Activated CD4-positive, alpha-beta T cell treated with anti-CD3 and anti-CD28 coated beads for 36 hours (primary cell): ENCODE measurements at regions of chr7 and their contacts with region 1.

Region 1: DNA sequence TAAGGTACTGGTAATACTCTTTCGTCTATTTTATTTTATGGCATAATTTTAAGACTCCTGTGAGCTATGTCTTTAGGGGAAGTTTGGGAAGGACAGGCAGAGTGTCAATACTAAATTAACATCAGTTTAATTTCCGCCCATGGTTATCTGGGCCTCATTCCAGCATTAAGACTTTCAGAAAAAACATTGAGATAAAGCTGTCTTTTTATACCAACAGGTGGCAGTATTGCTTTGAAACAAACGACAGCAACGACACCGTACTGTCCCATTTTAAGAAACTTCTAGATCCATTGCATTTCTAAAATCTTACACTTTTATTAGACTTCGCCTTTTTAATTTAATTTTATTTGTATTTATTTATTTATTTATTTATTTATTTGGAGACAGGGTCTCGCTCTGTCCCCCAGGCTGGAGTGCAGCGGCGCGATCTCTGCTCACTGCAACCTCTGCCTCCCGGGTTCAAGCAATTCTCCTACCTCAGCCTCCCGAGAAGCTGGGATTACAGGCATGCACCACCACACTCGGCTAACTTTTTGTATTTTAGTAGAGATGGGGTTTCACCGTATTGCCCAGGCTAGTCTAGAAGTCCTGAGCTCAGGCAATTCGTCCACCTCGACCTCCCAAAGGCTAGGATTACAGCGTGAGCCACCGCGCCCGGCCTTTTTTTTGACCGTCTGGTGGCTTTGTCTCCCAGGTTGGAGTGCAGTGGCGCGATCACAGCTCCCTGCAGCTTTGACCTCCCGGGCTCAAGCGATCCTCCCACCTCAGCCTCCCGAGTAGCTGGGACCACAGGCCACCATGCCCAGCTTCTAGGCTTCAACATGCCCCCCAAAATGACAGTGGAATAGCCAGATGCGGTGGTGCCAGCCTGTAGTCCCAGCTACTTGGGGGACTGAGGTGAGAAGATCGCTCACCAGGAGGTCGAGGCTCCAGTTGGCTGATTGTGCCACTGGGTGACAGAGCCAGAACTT is 78.7 kb upstream of the C1GALT1 start:
- DNase-seq: no peak
- ATAC-seq: peak; percentile 57
- H3K4me3 Mint-ChIP-seq: no peak overlapping the region
- H3K27ac Mint-ChIP-seq: no peak overlapping the region
- H3K4me1 Mint-ChIP-seq: peaks cover 27% of the 10 kb centered on the region
- H3K27me3 Mint-ChIP-seq: no peaks in the 10 kb centered on the region

Region 2: GRCh38 chr7:7257899-7258692 is 154.5 kb after region 1 on chr7:
- CTCF ChIA-PET with region 1: no interaction called
- POLR2A ChIA-PET with region 1: no interaction called
- intact Hi-C with region 1: loop called in 1 of 2 experiments (anchors 10 kb)
- DNase-seq: no peak
- ATAC-seq: peak; percentile 67
- H3K4me3 Mint-ChIP-seq: peak overlapping the region; percentile 33
- H3K27ac Mint-ChIP-seq: peak overlapping the region; percentile 72
- H3K4me1 Mint-ChIP-seq: peaks cover 33% of the 10 kb centered on the region
- H3K27me3 Mint-ChIP-seq: no peaks in the 10 kb centered on the region

Region 3: DNA sequence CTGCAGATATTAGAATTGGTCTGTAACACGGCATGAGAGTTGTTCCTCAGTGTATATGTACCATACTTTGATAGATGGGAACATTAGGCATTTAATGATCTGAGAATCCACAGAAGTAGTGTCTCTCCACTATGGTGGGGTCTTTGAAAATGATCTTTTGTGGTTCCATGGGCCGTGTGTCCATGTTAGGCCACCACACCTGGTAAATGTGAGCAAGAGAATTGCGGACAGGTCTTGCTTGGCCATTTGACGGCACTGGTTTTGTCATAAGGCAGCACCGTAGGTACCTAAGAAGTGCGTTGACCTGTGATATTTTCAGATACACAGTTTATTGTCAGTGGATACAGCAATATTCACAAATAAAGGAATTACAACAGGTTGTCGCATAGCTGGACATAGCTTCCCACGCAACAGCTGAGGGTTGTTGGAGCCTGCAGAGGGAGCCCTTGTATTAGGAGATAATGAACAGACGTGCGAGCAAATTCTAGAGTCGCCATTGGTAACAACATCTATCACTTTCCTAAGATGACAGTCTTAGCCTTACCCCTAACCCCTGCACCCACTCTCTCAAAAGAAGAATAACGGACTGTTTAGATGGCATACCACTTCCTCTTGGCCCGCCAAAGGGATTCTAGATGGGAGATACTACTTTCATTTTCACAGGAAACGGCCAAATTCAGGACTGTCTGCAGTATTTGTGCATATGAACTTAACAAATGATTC is 320.7 kb after region 1 on chr7:
- CTCF ChIA-PET with region 1: interaction called, 14 read pairs
- POLR2A ChIA-PET with region 1: no interaction called
- intact Hi-C with region 1: loop called (anchors 5 kb)
- DNase-seq: peak; percentile 65
- ATAC-seq: peak; percentile 92
- H3K4me3 Mint-ChIP-seq: peak overlapping the region; percentile 55
- H3K27ac Mint-ChIP-seq: no peak overlapping the region
- H3K4me1 Mint-ChIP-seq: peaks cover 6% of the 10 kb centered on the region
- H3K27me3 Mint-ChIP-seq: no peaks in the 10 kb centered on the region

Region 4: GRCh38 chr7:8217200-8218068 is 1113.8 kb after region 1 on chr7:
- CTCF ChIA-PET with region 1: interaction called, 3 read pairs
- POLR2A ChIA-PET with region 1: no interaction called
- intact Hi-C with region 1: loop called (anchors 1 to 5 kb)
- DNase-seq: no peak
- ATAC-seq: peak; percentile 49
- H3K4me3 Mint-ChIP-seq: no peak overlapping the region
- H3K27ac Mint-ChIP-seq: no peak overlapping the region
- H3K4me1 Mint-ChIP-seq: peaks cover 2% of the 10 kb centered on the region
- H3K27me3 Mint-ChIP-seq: no peaks in the 10 kb centered on the region